A549 (cell line): ENCODE measurements at regions of chr10 and their contacts with region 1.

Region 1: DNA sequence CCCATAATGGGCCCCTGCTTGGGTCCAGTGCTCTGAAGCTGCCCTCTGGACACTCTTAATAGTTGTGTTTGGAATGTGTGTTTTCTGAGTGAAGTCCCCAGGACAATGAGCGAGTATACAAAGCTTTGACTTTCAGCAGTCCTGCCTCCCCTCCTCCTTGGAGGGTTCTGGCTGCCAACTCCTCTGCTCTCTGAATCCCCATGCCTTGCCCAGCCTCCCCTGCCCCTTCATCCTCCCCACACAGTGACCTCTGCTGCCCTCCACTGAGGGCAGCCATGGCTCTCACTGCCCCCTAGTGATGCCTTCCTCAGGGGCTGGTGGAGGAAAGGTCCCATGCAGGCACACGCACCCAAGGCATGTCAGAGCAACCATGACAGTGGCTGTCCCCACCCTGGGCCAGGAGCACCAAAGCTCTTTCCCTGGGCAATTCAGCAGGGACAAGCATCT is 40.9 kb downstream of the FRMPD2 start:
- DNase-seq: no peak
- ATAC-seq: peak in 1 of 2 experiments; percentile 62; a peak in 3 of 6 replicates
- H3K4me3 ChIP-seq: no peak overlapping the region
- H3K27ac ChIP-seq: no peak overlapping the region
- H3K4me1 ChIP-seq: no peaks in the 10 kb centered on the region
- CTCF ChIP-seq: no peak
- EP300 ChIP-seq: no peak
- POLR2A ChIP-seq: no peak
- RAD21 ChIP-seq: peak in 1 of 2 experiments; percentile 21; a peak in 1 of 5 replicates

Region 2: DNA sequence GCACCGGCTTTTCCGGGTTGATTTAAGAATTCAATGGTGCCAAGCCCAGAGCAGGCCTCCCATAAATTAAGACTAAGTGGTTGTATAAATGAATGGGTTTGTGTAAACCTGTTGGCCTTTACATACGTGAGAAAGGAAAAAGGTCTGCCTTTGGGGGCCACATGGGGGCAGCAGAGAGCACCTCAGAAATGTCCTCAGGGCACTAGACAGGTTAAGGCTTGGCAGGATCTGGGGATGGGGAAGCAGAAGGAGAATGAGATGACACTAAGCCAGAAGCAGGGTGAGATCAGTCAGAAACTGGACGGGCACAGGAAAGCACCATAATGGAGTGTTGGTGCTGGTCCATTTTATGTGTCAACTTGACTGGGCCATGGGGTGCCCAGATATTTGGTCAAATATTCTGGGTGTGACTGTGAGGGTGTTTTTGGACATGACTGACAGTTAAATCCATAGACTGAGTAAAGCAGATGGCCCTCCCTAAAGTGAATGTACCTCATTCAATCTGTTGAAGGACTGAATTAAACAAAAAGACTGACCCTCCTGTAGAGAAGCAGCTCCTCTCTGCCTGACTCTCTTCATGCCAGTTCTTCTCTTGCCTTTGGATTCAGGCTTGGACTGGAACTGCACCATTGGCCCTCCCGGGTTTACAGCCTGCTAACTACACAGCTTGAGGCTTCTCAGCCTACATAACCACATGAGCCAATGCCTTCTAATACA is 17.9 kb before region 1 on chr10:
- CTCF ChIA-PET with region 1: interaction called, 13 read pairs
- POLR2A ChIA-PET with region 1: no interaction called
- DNase-seq: peak; percentile 19 to 46
- ATAC-seq: peak in 1 of 2 experiments; percentile 85; a peak in 3 of 6 replicates
- H3K4me3 ChIP-seq: no peak overlapping the region
- H3K27ac ChIP-seq: no peak overlapping the region
- H3K4me1 ChIP-seq: no peaks in the 10 kb centered on the region
- CTCF ChIP-seq: peak; percentile 59
- EP300 ChIP-seq: no peak
- POLR2A ChIP-seq: no peak
- RAD21 ChIP-seq: peak; percentile 32 to 48; a peak in 4 of 5 replicates